ENCODE measurements at regions of chr19 and their contacts with region 1.

Region 1: GRCh38 chr19:49427855-49428546 is 2.8 kb downstream of the GFY start:
- DNase-seq: no peak
- H3K4me3 ChIP-seq: no peak overlapping the region
- CTCF ChIP-seq: no peak

Region 2: GRCh38 chr19:49380391-49380790 is 47.6 kb before region 1 on chr19:
- in situ Hi-C with region 1: loop called (anchors 5 kb)
- DNase-seq: no peak
- H3K4me3 ChIP-seq: no peak overlapping the region
- CTCF ChIP-seq: no peak

Region 3: DNA sequence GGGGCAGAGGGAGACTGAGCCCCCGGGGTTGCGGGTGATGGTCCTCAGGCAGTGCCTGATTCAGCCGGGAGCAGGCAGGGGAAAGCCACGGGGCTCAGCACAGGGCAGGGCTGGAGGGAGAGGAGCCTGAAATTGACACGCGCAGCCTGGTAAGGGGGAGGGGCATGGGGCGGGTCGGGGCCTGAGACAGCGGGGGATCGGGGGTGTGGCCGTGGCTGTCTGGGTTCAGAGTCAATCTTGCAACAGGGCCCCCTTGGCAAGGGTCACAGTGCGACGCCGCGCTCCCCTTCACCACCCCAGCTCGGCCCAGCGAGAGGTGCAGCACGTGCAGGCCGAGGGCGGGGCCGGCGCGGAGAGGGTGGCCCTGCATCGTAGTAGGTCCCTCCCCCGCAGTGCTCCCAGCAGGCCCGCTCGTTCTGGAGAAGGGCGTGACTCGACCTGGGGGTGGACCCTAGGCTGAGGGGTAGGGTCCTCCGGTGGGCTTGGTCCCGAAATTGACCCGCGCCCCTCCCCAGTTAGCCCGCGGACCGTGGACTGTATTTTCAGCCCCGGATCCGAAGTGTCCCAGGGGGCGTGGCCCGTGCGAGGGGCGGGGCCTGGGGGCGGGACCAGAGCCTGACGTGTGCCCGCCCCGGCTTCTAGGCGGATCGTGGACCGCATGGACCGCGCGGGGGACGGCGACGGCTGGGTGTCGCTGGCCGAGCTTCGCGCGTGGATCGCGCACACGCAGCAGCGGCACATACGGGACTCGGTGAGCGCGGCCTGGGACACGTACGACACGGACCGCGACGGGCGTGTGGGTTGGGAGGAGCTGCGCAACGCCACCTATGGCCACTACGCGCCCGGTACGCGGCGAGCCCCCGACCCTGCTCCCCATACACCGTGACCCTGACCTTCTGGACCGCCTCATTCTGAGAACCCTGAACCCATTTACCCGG is 105.8 kb after region 1 on chr19:
- in situ Hi-C with region 1: no loop called
- DNase-seq: no peak
- H3K4me3 ChIP-seq: peak overlapping the region; percentile 53
- CTCF ChIP-seq: peak; percentile 36

Measured in astrocyte of the cerebellum (primary cell).